Common myeloid progenitor, CD34-positive (primary cell): ENCODE measurements at regions of chr2 and their contacts with region 1.

Region 1: DNA sequence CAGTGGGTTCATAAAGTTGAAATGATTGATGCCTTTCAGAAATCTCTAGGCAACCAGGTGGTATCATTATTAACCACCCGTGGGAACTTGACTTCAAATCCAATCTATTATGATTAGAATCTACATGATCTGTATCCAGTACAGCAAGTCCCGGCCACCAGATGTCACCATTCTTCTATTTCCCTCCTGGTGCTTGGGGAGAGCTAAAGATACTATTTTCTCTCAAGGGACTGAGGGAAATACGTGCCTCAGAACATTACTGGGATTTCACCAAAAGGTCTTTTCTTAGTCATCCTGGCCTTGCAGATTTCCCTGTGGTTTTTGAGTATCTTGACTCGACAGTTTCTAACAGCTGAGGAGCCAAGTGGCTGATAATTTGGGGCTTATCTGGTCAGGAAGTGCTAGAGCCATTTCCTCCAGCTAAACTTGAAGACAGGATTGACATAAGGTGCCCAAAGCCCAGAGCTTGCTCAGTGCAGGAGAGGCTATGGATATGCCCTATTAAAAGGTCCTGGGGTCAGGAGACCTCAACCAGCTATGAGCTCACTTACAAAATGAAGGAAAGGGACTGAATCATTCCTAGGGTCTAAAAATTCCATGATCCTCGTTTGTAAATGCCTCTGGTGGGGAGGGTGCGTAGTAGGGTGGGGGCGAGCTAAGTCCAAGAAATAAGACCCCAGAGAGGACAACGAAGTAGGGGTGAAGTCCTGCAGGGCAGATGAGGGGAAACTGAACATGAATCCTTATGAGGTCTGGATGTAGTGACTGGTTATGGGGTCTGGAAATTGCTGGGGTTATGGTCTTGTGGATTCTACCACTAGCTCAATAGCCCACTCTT is 135.4 kb upstream of the MGAT5 start:
- DNase-seq: peak; percentile 94 to 96 (median 96)
- H3K4me3 ChIP-seq: peak overlapping the region in 1 of 7 experiments; percentile 89
- H3K27ac ChIP-seq: no peak overlapping the region
- H3K4me1 ChIP-seq: peaks cover 4 to 39% (median 30%) of the 10 kb centered on the region in 4 experiments
- H3K27me3 ChIP-seq: no peaks in the 10 kb centered on the region

Region 2: GRCh38 chr2:133886735-133887660 is 231.5 kb before region 1 on chr2:
- CTCF ChIA-PET with region 1: interaction called, 10 read pairs
- POLR2A ChIA-PET with region 1: no interaction called
- DNase-seq: peak; percentile 49 to 67 (median 63)
- H3K4me3 ChIP-seq: no peak overlapping the region
- H3K27ac ChIP-seq: no peak overlapping the region
- H3K4me1 ChIP-seq: no peaks in the 10 kb centered on the region
- H3K27me3 ChIP-seq: peaks cover 0 to 6% (median 2%) of the 10 kb centered on the region in 5 experiments

Region 3: GRCh38 chr2:134087371-134087921 is 31.1 kb before region 1 on chr2:
- CTCF ChIA-PET with region 1: no interaction called
- POLR2A ChIA-PET with region 1: no interaction called
- DNase-seq: no peak
- H3K4me3 ChIP-seq: no peak overlapping the region
- H3K27ac ChIP-seq: no peak overlapping the region
- H3K4me1 ChIP-seq: no peaks in the 10 kb centered on the region
- H3K27me3 ChIP-seq: peaks cover 0 to 2% (median 0%) of the 10 kb centered on the region in 5 experiments

Region 4: GRCh38 chr2:134217351-134217750 is 98.9 kb after region 1 on chr2:
- CTCF ChIA-PET with region 1: interaction called, 12 read pairs
- POLR2A ChIA-PET with region 1: no interaction called
- DNase-seq: no peak
- H3K4me3 ChIP-seq: no peak overlapping the region
- H3K27ac ChIP-seq: no peak overlapping the region
- H3K4me1 ChIP-seq: peaks cover 13 to 37% (median 17%) of the 10 kb centered on the region in 4 experiments
- H3K27me3 ChIP-seq: no peaks in the 10 kb centered on the region

Region 5: DNA sequence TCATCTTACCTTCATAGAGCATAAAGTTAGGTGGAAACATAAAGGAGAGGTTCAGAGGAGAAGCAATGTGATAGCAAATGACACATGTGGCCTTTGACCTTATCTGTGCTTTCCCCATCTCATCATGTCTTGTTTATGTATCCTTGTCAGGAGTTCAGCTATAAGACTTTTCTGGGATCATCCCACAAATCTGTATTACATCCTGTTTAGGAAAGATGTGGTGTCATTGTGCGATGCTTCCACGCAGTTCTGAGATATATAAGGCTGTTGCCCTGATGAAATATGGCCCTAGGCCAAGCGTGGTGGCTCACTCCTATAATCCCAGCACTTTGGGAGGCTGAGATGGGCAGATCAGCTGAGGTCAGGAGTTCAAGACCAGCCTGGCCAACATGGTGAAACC is 119.9 kb after region 1 on chr2:
- CTCF ChIA-PET with region 1: interaction called, 72 read pairs
- POLR2A ChIA-PET with region 1: no interaction called
- DNase-seq: no peak
- H3K4me3 ChIP-seq: no peak overlapping the region
- H3K27ac ChIP-seq: no peak overlapping the region
- H3K4me1 ChIP-seq: peaks cover 12 to 15% (median 13%) of the 10 kb centered on the region in 4 experiments
- H3K27me3 ChIP-seq: no peaks in the 10 kb centered on the region

Region 6: DNA sequence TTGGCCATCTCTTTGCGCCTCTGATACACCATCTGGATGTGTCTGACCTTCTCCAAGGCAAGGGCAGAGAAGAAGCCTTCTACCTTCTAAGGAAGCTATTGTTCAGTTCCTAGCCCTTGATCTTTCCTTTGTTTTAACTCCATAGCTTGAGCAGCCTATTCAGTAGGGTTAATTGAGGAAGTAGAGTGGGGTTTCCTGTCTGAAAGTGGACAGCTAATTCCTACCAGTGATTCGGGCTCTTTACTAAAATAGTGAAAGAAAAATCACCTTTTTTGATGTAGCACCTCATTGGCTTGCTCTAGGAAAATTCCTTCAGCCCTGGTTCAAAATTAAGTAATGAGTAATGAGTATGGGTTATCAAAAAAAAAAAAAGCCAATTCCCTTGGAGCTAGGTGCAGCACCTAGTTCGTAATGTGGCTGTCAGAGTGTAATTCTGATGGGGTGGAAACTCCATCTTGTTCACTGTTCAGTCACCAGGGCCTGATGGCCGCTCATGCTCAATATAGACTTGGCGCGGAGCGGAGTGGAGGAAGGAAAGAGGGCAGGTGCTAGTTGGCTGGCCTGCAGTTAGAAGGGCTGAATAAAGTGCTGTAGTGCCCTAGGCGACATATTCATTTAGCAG is 132.5 kb after region 1 on chr2:
- CTCF ChIA-PET with region 1: interaction called, 72 read pairs
- POLR2A ChIA-PET with region 1: no interaction called
- DNase-seq: peak in 2 of 3 donors; percentile 33 to 51
- H3K4me3 ChIP-seq: no peak overlapping the region
- H3K27ac ChIP-seq: no peak overlapping the region
- H3K4me1 ChIP-seq: peaks cover 19 to 51% (median 31%) of the 10 kb centered on the region in 4 experiments
- H3K27me3 ChIP-seq: no peaks in the 10 kb centered on the region

Region 7: GRCh38 chr2:134411828-134412638 is 293.5 kb after region 1 on chr2:
- CTCF ChIA-PET with region 1: interaction called, 109 read pairs
- POLR2A ChIA-PET with region 1: interaction called, 8 read pairs
- DNase-seq: peak; percentile 78 to 91 (median 90)
- H3K4me3 ChIP-seq: no peak overlapping the region
- H3K27ac ChIP-seq: no peak overlapping the region
- H3K4me1 ChIP-seq: peaks cover 6 to 14% (median 8%) of the 10 kb centered on the region in 4 experiments
- H3K27me3 ChIP-seq: no peaks in the 10 kb centered on the region

Region 8: GRCh38 chr2:134574611-134575330 is 456.3 kb after region 1 on chr2:
- CTCF ChIA-PET with region 1: no interaction called
- POLR2A ChIA-PET with region 1: no interaction called
- DNase-seq: no peak
- H3K4me3 ChIP-seq: no peak overlapping the region
- H3K27ac ChIP-seq: no peak overlapping the region
- H3K4me1 ChIP-seq: peaks cover 0 to 7% (median 0%) of the 10 kb centered on the region in 4 experiments
- H3K27me3 ChIP-seq: no peaks in the 10 kb centered on the region